ENCODE measurements at regions of chr3 and their contacts with region 1.

Region 1: DNA sequence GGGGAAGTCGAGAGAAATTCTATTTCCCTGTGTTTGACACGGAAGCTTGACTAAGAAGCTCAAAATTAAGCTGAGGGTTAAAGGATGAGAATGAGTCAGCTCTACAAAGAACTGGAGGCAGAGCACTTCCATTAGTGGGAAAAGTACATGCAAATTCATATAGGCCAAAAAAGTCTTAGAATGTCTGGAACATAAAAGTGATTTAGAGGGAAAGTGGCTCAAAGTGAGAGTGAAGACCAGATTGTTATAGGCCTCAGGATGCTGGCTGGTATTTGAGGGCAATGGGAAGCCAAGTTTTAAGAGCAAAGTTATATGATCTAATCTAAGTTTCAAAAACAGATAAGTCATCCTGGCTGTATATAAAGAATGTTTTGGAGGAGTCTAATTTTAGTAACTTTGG is 857.3 kb downstream of the NAALADL2 start:
- ATAC-seq: no peak
- H3K4me3 ChIP-seq: no peak overlapping the region
- H3K27ac ChIP-seq: no peak overlapping the region
- H3K4me1 ChIP-seq: no peaks in the 10 kb centered on the region

Region 2: GRCh38 chr3:175208330-175208729 is 508.1 kb before region 1 on chr3:
- in situ Hi-C with region 1: loop called in 1 of 9 experiments (anchors 25 kb)
- ATAC-seq: peak in 5 of 8 experiments; percentile 42 to 89 (median 59)
- H3K4me3 ChIP-seq: no peak overlapping the region
- H3K27ac ChIP-seq: no peak overlapping the region
- H3K4me1 ChIP-seq: no peaks in the 10 kb centered on the region

Region 3: GRCh38 chr3:175836622-175837021 is 120.2 kb after region 1 on chr3:
- in situ Hi-C with region 1: no loop called
- ATAC-seq: no peak
- H3K4me3 ChIP-seq: no peak overlapping the region
- H3K27ac ChIP-seq: no peak overlapping the region
- H3K4me1 ChIP-seq: peaks cover 4 to 13% of the 10 kb centered on the region in 2 donors

Measured in motor neuron (in vitro differentiated cells).